Activated CD4-positive, alpha-beta T cell treated with anti-CD3 and anti-CD28 coated beads, Interleukin-2, amount 10 ng/mL, durations not matched to agents 24 days and 14 days (primary cell): ENCODE measurements at regions of chr11 and their contacts with region 1.

Region 1: DNA sequence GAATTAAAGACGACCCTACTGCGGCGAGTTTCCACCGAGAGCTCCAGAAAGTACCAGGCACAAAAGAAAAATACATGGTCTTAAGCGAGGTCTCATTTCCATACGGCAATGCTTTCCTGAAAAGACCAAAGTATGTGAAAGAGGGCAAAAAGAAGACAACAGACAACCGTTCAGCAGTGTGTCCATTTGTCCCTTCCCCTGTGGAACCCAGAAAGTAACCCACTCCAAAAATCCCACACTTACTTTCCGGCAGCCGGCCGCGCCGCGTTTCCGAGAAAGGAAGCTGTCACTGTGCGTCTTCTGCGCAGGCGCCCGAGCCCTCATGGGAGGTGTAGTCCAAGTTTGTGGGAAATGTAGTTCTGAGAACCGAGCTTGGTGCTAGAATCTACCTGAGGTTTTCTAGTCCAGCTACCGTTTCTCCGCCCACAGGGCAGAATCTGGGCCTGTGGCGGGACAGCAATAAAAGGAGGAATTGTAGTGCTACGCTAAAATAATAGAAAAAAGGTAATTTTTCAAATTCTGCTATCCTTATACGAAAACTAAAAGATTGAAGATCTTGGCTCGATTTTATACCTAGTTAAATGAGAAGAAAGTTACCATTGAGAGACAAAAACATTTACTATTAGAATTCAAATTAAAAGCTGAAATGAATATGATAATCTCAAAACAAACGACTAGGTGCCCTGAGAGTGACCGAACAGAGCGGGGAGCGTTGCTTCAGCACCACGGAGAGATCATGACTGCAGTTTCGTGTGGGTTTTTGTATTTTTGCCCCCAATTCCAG is at the start of gene PUS3:
- DNase-seq: peak; percentile 97
- H3K4me3 Mint-ChIP-seq: peak within 1 kb of the TSS; percentile 95
- H3K27ac Mint-ChIP-seq: peak within 1 kb of the TSS; percentile 94
- H3K4me1 Mint-ChIP-seq: peaks cover 28% of the 10 kb centered on the region
- H3K27me3 Mint-ChIP-seq: peaks cover 29% of the 10 kb centered on the region
- total RNA-seq, gene PUS3: 18.0 and 19.2 TPM in 2 replicates

Region 2: DNA sequence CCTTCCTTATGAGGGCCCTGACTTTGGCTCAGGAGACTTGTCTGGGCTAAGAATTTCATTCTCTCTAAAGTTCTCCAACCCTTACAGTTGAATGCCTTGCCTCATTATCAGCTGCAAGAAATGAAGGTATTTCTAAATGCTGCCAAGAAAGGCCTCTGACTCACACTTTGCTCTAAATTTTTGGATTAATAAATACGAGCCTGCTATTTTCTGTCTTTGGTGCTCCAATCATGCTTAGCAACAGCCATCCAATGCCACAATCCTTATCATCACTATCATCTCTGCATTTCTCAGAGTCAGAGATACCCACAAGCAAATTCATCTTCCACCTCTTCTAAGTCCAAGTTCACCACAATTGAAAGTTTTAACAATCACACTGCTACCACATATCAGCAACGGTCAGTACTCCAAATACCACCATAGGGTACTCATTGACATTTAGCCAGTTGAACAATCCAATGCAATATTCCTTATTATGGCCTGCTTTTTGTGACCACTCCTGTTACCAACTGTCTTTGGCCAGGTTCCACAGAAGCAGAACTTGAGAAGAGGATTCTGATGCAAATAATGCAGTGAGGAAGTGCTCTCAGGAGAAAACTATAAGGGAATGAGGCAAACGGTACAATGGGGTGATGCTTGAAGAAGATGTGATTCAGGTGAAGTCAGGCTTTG is 130.1 kb before region 1 on chr11:
- intact Hi-C with region 1: no loop called
- DNase-seq: no peak
- H3K4me3 Mint-ChIP-seq: no peak overlapping the region
- H3K27ac Mint-ChIP-seq: no peak overlapping the region
- H3K4me1 Mint-ChIP-seq: no peaks in the 10 kb centered on the region
- H3K27me3 Mint-ChIP-seq: peaks cover 5% of the 10 kb centered on the region

Region 3: DNA sequence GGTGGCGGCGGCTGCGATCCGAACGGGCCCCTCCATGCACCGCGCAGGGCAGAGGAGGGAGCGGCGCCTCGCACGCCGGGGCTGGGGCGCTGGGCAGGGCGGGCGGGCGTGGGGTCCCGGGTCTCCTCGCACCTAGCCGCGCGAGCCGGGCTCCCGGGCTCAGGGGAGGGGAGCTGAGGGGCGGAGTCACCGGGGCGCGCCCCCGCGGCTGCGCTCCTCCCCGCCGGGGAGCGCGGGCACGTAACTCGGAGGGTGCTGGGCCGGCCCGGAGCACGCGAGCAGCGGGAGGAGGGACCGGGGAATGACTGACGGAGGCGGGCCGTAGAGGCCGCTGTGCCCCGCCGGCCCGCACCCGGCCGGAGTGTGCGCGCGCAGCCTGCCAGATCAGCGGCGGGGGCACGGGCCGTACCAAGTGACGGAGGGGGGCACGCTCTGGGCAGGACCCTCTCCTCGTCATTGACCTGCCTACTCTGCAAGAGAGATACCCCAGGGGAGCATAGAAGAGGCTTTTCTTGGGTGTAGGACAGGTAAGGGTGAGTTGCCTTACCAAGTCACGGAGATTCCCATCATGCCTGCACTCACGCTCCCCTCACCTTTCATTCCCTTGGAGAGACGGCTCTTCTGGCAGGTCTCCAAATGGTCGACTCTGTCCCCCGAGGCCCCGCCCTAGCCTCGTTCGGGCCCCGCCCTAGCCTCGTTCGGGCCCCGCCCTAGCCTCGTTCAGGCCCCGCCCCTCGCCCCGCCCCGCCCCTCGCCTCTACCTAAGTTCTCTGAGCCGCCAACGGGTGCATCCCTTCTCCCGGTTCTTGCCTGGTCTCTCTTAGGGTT is 159.8 kb after region 1 on chr11 and contains the start of gene CDON:
- intact Hi-C with region 1: loop called (anchors 5 kb)
- DNase-seq: peak; percentile 98
- H3K4me3 Mint-ChIP-seq: peak within 1 kb of the TSS; percentile 80
- H3K27ac Mint-ChIP-seq: peak within 1 kb of the TSS; percentile 97
- H3K4me1 Mint-ChIP-seq: peaks cover 5% of the 10 kb centered on the region
- H3K27me3 Mint-ChIP-seq: peaks cover 46% of the 10 kb centered on the region
- total RNA-seq, gene CDON: 1.9 TPM in 2 replicates